ENCODE measurements at regions of chr12 and their contacts with region 1.

Region 1: DNA sequence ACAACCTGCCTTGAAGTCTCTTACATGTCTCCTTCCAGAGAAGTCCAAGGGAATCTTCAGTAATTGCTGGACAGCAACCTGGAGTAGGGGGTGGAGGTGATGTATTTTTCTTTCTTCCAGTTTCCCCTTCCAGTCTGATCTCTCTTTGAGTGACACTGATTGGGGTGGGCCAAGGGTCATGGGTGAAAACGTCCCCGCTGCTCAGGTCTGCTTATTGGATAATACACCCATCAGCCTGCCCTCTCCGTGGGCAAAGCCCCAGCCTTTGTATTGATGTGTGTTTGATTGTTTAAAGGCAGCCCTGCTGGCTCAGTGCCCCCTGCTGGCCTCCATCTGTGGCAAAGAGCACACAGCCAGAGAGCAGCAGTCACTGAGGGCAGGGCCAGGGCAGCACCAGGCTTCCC is 35.7 kb upstream of the ATP2A2 start:
- DNase-seq: peak; percentile 57
- ATAC-seq: peak; percentile 69
- H3K4me3 Mint-ChIP-seq: no peak overlapping the region
- H3K27ac Mint-ChIP-seq: peak overlapping the region; percentile 30; the same call in 1 of the 2 replicates
- H3K4me1 Mint-ChIP-seq: peaks cover 19% of the 10 kb centered on the region
- H3K27me3 Mint-ChIP-seq: no peaks in the 10 kb centered on the region
- CTCF ChIP-seq: no peak

Region 2: GRCh38 chr12:110149086-110149660 is 96.2 kb before region 1 on chr12:
- CTCF ChIA-PET with region 1: no interaction called
- POLR2A ChIA-PET with region 1: no interaction called
- DNase-seq: no peak
- ATAC-seq: no peak
- H3K4me3 Mint-ChIP-seq: no peak overlapping the region
- H3K27ac Mint-ChIP-seq: peak overlapping the region; percentile 1; the same call in 1 of the 2 replicates
- H3K4me1 Mint-ChIP-seq: no peaks in the 10 kb centered on the region
- H3K27me3 Mint-ChIP-seq: no peaks in the 10 kb centered on the region
- CTCF ChIP-seq: no peak

Region 3: GRCh38 chr12:110266980-110267620 is 21.7 kb after region 1 on chr12:
- CTCF ChIA-PET with region 1: no interaction called
- POLR2A ChIA-PET with region 1: no interaction called
- DNase-seq: no peak
- ATAC-seq: peak; percentile 21
- H3K4me3 Mint-ChIP-seq: no peak overlapping the region
- H3K27ac Mint-ChIP-seq: no peak overlapping the region
- H3K4me1 Mint-ChIP-seq: peaks cover 44% of the 10 kb centered on the region
- H3K27me3 Mint-ChIP-seq: no peaks in the 10 kb centered on the region
- CTCF ChIP-seq: no peak

Region 4: GRCh38 chr12:110280779-110281548 is 35.6 kb after region 1 on chr12 and contains the start of gene ATP2A2:
- CTCF ChIA-PET with region 1: interaction called, 13 read pairs
- POLR2A ChIA-PET with region 1: no interaction called
- DNase-seq: peak; percentile 80
- ATAC-seq: peak; percentile 80
- H3K4me3 Mint-ChIP-seq: peak within 1 kb of the TSS; percentile 89
- H3K27ac Mint-ChIP-seq: peak within 1 kb of the TSS; percentile 73
- H3K4me1 Mint-ChIP-seq: peaks cover 51% of the 10 kb centered on the region
- H3K27me3 Mint-ChIP-seq: peaks cover 13% of the 10 kb centered on the region
- CTCF ChIP-seq: no peak
- total RNA-seq, gene ATP2A2: 216 to 239 TPM (median 216 TPM) in 3 replicates

Region 5: GRCh38 chr12:110330544-110330943 is 85.2 kb after region 1 on chr12:
- CTCF ChIA-PET with region 1: no interaction called
- POLR2A ChIA-PET with region 1: no interaction called
- DNase-seq: no peak
- ATAC-seq: no peak
- H3K4me3 Mint-ChIP-seq: no peak overlapping the region
- H3K27ac Mint-ChIP-seq: peak overlapping the region; percentile 88
- H3K4me1 Mint-ChIP-seq: peaks cover 10% of the 10 kb centered on the region
- H3K27me3 Mint-ChIP-seq: no peaks in the 10 kb centered on the region
- CTCF ChIP-seq: no peak

Region 6: DNA sequence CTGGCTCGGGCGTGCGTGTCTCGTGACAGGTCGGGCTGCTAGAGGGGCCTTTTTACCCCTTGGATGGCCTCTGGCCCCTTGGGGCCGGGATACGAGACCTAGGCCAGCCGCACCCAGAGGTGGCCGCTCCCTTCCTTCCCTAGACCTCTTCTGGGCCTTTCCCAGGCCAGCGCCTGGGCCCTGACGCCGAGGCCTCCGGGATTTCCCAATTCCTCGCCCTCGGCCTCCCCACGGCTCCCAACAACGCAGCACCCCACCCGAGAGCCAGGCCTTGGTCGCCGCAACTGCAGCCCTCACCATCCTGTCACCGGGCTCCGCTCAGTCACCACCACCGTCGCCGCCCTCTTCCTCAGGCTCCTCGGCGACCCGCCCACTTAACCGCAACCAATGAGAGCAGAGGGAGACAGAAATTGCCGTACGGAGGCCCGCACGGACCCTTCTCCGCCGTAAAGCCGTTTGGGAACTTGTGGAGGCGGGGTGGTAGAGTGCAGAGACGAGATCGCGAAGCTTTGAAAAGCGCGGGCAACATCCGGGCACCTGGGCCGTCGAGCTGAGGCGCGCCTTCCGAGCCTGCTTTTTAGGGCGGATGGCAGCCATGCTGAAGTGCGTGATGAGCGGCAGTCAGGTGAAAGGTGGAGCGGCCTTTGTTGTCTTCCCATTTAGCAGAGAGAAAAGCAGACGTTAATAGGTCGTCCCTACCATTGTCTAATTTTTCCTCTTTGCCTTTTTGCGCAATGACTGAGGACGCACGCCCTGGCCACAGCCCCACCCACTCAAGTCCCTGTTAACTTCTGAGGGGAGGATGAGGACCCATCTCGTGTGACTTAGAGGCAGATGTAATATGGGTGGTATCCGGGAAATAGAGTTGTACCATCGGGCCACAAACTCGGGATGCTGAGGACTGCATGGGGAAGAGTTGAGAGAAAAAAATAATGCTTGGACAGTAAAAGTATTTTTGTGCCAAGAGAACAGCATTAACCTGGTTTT is 256.7 kb after region 1 on chr12 and contains the starts of genes RAD9B and VPS29:
- CTCF ChIA-PET with region 1: no interaction called
- POLR2A ChIA-PET with region 1: no interaction called
- DNase-seq: peak; percentile 98
- ATAC-seq: peak; percentile 98
- H3K4me3 Mint-ChIP-seq: peak within 1 kb of the TSS; percentile 98
- H3K27ac Mint-ChIP-seq: peak within 1 kb of the TSS; percentile 90
- H3K4me1 Mint-ChIP-seq: peaks cover 8% of the 10 kb centered on the region
- H3K27me3 Mint-ChIP-seq: peaks cover 30% of the 10 kb centered on the region
- CTCF ChIP-seq: no peak
- total RNA-seq, gene RAD9B: 0.09 to 0.32 TPM in 2 of 3 replicates, not detected in the other
- total RNA-seq, gene VPS29: 51.2 to 66.3 TPM (median 54.4 TPM) in 3 replicates